WTC11 (cell line): ENCODE measurements at regions of chr11 and their contacts with region 1.

Region 1: GRCh38 chr11:107590460-107591377 is at the start of gene ELMOD1:
- DNase-seq: peak; percentile 67
- ATAC-seq: peak; percentile 51
- H3K4me3 Mint-ChIP-seq: peak within 1 kb of the TSS; percentile 95
- H3K27ac Mint-ChIP-seq: no peak within 1 kb of the TSS
- H3K4me1 Mint-ChIP-seq: peaks cover 43% of the 10 kb centered on the region
- H3K27me3 Mint-ChIP-seq: peaks cover 72% of the 10 kb centered on the region
- CTCF ChIP-seq: no peak
- total RNA-seq, gene ELMOD1: 0.98 to 2.3 TPM (median 1.4 TPM) in 3 replicates

Region 2: GRCh38 chr11:107397357-107397756 is 193.4 kb before region 1 on chr11:
- CTCF ChIA-PET with region 1: no interaction called
- POLR2A ChIA-PET with region 1: no interaction called
- DNase-seq: peak; percentile 55
- ATAC-seq: peak; percentile 91
- H3K4me3 Mint-ChIP-seq: peak overlapping the region; percentile 7; the same call in 1 of the 2 replicates
- H3K27ac Mint-ChIP-seq: peak overlapping the region; percentile 86
- H3K4me1 Mint-ChIP-seq: peaks cover 22% of the 10 kb centered on the region
- H3K27me3 Mint-ChIP-seq: no peaks in the 10 kb centered on the region
- CTCF ChIP-seq: no peak

Region 3: DNA sequence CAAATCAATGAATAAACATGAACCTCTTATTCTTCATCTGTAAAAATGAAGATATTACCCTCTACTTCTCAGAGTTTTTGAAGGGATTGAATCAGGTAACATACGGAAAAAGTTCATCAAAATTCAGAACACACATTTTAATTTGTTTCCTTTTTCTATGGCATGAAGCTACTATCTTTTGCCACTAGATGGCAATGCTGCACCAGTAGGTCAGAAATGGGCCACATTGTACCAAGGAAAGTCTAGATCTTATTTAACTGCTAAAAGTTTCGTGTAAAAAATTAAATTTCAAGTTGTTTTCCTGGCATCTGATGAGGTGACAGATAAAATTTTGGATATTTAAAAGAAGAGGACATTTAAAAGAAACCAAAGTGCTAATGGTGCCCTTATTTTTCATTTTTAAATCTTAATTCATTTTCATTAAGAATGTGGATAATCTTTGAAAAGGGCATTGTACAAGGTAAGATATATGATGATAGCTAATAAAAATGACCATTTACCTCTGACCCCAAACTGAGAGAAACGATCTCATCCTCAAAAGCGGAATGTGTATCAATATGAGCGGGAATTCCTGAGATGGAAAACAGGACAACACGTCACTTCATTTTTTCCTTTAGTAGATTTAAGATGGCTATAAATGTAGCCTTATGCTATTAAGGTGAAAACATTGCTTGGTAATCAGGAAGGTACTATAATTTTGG is 41.3 kb before region 1 on chr11:
- CTCF ChIA-PET with region 1: no interaction called
- POLR2A ChIA-PET with region 1: no interaction called
- DNase-seq: no peak
- ATAC-seq: no peak
- H3K4me3 Mint-ChIP-seq: no peak overlapping the region
- H3K27ac Mint-ChIP-seq: no peak overlapping the region
- H3K4me1 Mint-ChIP-seq: no peaks in the 10 kb centered on the region
- H3K27me3 Mint-ChIP-seq: no peaks in the 10 kb centered on the region
- CTCF ChIP-seq: peak; percentile 53

Region 4: GRCh38 chr11:107606141-107606540 is 15.4 kb after region 1 on chr11:
- CTCF ChIA-PET with region 1: interaction called, 10 read pairs
- POLR2A ChIA-PET with region 1: no interaction called
- DNase-seq: peak; percentile 30
- ATAC-seq: peak; percentile 66
- H3K4me3 Mint-ChIP-seq: no peak overlapping the region
- H3K27ac Mint-ChIP-seq: peak overlapping the region; percentile 10
- H3K4me1 Mint-ChIP-seq: peaks cover 56% of the 10 kb centered on the region
- H3K27me3 Mint-ChIP-seq: peaks cover 6% of the 10 kb centered on the region; the same call in 1 of the 2 replicates
- CTCF ChIP-seq: no peak